ENCODE measurements at regions of chr6 and their contacts with region 1.

Region 1: DNA sequence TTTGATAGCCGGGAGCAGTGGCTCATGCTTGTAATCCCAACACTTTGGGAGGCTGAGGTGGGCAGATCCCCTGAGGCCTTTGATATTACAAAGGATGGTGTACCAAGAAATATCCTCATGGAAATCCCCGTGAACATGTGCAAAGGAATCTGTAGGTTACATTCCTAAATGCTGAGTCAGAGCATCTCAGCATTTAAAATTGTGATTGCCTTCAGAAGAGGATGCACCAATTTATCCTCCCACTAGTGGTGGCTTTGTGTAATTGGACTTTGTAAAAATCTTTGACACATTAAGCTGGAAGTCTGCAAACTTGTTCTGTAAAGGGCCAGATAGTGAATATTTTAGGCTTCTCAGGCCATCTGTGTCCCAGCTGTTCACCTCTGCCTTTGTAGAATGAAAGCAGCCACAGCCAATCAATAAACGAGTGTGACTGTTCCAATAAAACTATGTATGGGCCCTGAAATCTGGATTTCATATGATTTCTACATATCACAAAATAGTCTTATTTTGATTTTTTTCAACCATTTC is 11.8 kb downstream of the TMEM14B start:
- DNase-seq: peak; percentile 92
- H3K4me3 Mint-ChIP-seq: no peak overlapping the region
- H3K27ac Mint-ChIP-seq: peak overlapping the region; percentile 86
- H3K4me1 Mint-ChIP-seq: peaks cover 20% of the 10 kb centered on the region
- H3K27me3 Mint-ChIP-seq: no peaks in the 10 kb centered on the region
- CTCF ChIP-seq: peak; percentile 51

Region 2: DNA sequence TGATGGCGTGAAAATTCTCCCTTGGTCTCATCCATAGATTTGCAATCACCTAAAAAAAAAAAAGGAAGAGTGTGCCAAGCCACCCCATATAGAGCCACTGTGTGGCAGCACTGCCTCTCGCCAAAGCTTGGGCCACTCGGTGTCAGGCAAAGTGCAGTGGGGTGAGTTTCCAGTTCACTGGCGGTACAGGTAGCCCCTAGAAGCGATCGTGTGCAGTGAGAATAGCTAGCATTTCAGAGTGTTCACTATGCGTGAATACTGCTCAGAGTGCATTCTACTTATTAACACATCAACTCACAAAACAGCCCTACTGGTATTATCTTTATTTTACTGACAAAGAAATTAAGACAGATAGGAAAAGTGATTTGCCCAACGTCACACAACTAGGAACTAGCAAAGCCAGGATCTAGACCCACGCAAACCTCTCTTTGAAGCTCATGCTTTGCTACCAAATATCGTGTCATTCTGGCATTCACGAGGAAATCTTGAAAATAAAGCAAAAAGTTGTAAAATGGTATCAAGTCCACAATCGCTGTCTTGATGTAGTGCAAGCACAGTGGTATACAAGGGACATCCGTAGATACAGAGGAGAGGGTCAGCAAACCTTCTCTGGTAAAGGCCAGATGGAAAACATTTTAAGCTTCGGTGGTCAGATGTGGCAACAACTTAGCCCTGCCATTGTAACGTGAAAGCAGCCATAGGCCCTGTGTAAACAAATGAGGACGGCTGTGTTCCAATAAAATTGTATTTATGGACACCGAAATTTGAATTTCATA is 248.6 kb before region 1 on chr6:
- CTCF ChIA-PET with region 1: interaction called, 8 read pairs
- POLR2A ChIA-PET with region 1: interaction called, 3 read pairs
- intact Hi-C with region 1: loop called (anchors 1 kb)
- DNase-seq: peak; percentile 67
- H3K4me3 Mint-ChIP-seq: no peak overlapping the region
- H3K27ac Mint-ChIP-seq: no peak overlapping the region
- H3K4me1 Mint-ChIP-seq: peaks cover 6% of the 10 kb centered on the region
- H3K27me3 Mint-ChIP-seq: no peaks in the 10 kb centered on the region
- CTCF ChIP-seq: peak; percentile 71

Region 3: DNA sequence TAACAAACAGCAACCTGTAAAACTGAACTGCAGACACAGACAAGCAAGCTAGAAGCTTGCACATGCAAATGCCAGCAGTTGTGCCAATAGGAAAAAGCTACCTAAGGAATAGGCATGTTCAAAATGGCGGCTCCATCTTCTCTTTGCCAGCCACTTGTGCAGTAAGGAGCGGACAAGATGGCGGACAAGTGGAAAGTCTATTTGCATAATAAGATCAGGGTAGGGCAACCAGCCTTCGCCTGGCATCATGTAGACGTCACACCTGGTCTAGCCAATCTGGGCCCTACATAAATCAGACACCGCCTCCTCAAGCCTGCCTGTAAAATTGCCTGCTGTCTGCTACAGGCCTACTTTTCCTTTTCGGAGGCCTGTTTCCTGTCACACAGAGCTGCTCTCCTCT is 83.0 kb before region 1 on chr6:
- CTCF ChIA-PET with region 1: no interaction called
- POLR2A ChIA-PET with region 1: no interaction called
- intact Hi-C with region 1: no loop called
- DNase-seq: no peak
- H3K4me3 Mint-ChIP-seq: no peak overlapping the region
- H3K27ac Mint-ChIP-seq: no peak overlapping the region
- H3K4me1 Mint-ChIP-seq: no peaks in the 10 kb centered on the region
- H3K27me3 Mint-ChIP-seq: no peaks in the 10 kb centered on the region
- CTCF ChIP-seq: no peak

Region 4: DNA sequence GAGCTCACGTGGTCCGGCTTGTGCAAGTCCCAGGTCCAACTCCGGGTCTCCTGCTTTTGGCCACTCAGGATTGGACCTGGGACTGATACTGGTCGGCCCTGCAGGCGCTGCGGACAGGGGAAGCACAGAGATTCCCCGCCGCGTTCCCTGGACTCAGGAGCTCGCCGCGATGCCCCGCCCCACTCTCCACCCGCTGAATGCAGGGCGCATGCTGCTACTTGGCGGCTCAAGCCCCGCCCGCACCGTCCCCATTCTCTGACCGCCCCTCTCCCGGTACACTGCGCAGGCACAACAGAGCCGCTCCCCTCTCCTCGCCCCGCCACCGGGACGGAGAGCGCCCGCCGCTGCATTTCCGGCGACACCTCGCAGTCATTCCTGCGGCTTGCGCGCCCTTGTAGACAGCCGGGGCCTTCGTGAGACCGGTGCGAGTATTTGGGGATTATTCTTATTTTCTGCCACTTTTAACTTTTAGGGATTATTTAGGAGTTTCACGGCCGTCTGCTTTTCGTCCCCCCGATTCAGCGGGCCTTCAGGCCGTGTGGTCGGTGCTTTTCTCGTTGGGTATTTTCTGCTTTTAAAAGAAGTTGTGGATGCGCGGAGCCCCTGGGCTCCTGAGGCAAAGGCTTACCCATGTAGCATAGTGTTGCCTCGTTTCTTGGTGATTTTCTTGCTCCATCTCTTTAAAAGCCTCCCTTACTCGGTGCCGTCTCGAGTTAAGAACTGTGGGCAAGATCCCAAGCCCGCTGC is 36.4 kb before region 1 on chr6 and contains the start of gene TMEM14C:
- CTCF ChIA-PET with region 1: interaction called, 3 read pairs
- POLR2A ChIA-PET with region 1: interaction called, 16 read pairs
- intact Hi-C with region 1: loop called (anchors 1 kb)
- DNase-seq: peak; percentile 98
- H3K4me3 Mint-ChIP-seq: peak within 1 kb of the TSS; percentile 96
- H3K27ac Mint-ChIP-seq: peak within 1 kb of the TSS; percentile 97
- H3K4me1 Mint-ChIP-seq: peaks cover 27% of the 10 kb centered on the region
- H3K27me3 Mint-ChIP-seq: no peaks in the 10 kb centered on the region
- CTCF ChIP-seq: no peak
- total RNA-seq, gene TMEM14C: 159 and 160 TPM in 2 replicates

Region 5: DNA sequence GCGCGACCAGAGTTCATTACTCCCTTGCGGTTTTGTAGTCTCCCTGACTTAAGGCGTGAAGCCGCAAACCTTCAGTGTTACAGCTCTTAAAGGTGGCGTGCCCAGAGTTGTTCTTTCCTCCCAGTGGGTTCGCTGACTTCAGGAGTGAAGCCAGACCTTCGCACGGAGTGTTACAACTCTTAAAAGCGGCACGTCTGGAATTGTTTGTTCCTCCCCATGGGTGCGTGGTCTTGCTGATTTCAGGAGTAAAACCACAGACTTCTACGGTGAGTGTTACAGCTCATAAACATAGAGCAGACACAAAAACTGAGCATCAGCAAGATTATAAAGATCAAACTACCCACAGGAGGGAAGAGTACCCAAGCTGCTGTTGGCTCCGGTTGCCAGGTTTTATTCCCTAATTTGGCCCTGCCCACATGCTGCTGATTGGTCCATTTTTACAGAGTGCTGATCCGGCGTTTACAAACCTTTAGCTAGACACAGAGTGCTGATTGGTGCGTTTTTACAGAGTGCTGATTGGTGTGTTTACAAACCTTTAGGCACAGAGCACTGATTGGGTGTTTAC is 26.1 kb before region 1 on chr6:
- CTCF ChIA-PET with region 1: interaction called, 6 read pairs
- POLR2A ChIA-PET with region 1: interaction called, 10 read pairs
- intact Hi-C with region 1: loop called (anchors 1 kb)
- DNase-seq: no peak
- H3K4me3 Mint-ChIP-seq: no peak overlapping the region
- H3K27ac Mint-ChIP-seq: peak overlapping the region; percentile 88
- H3K4me1 Mint-ChIP-seq: peaks cover 7% of the 10 kb centered on the region
- H3K27me3 Mint-ChIP-seq: no peaks in the 10 kb centered on the region
- CTCF ChIP-seq: no peak

Region 6: DNA sequence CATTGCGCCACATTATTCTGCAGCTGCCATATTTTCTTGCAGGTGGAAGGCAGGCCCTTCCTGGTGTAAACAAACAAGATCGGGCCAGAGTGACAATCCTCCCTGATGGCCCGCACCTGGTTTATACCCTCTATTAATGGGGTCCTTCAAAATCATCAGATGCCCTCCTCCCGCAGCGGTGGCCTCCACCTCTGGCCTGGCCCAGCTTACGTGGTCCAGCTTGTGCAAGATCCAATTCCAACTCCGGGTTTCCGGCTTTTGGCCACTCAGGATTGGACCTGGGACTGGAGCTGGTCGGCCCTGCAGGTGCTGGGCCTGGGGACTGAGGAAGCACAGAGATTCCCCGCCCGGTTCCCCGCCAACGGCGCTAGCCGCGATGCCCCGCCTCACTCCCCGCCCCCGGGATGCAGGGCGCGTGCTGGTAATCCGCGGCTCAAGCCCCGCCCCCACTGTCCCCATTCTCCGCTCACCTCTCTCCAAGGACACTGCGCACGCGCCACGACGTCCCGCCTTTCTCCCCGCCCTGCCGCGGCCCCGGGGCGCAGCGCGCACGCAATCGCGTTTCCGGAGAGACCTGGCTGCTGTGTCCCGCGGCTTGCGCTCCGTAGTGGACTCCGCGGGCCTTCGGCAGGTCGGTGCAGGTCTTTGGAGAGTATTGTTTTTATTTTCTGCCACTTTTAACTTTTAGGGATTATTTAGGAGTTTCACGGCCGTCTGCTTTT is 12.0 kb before region 1 on chr6 and contains the start of gene TMEM14B:
- CTCF ChIA-PET with region 1: interaction called, 7 read pairs
- POLR2A ChIA-PET with region 1: interaction called, 46 read pairs
- intact Hi-C with region 1: no loop called
- DNase-seq: peak; percentile 97
- H3K4me3 Mint-ChIP-seq: peak within 1 kb of the TSS; percentile 95
- H3K27ac Mint-ChIP-seq: peak within 1 kb of the TSS; percentile 95
- H3K4me1 Mint-ChIP-seq: peaks cover 18% of the 10 kb centered on the region
- H3K27me3 Mint-ChIP-seq: no peaks in the 10 kb centered on the region
- CTCF ChIP-seq: no peak
- total RNA-seq, gene TMEM14B: 122 and 143 TPM in 2 replicates

Region 7: GRCh38 chr6:10800829-10801535 is 41.6 kb after region 1 on chr6:
- CTCF ChIA-PET with region 1: interaction called, 7 read pairs
- POLR2A ChIA-PET with region 1: no interaction called
- intact Hi-C with region 1: loop called (anchors 1 kb)
- DNase-seq: peak; percentile 76
- H3K4me3 Mint-ChIP-seq: no peak overlapping the region
- H3K27ac Mint-ChIP-seq: peak overlapping the region; percentile 57
- H3K4me1 Mint-ChIP-seq: peaks cover 8% of the 10 kb centered on the region
- H3K27me3 Mint-ChIP-seq: no peaks in the 10 kb centered on the region
- CTCF ChIP-seq: peak; percentile 96

Region 8: DNA sequence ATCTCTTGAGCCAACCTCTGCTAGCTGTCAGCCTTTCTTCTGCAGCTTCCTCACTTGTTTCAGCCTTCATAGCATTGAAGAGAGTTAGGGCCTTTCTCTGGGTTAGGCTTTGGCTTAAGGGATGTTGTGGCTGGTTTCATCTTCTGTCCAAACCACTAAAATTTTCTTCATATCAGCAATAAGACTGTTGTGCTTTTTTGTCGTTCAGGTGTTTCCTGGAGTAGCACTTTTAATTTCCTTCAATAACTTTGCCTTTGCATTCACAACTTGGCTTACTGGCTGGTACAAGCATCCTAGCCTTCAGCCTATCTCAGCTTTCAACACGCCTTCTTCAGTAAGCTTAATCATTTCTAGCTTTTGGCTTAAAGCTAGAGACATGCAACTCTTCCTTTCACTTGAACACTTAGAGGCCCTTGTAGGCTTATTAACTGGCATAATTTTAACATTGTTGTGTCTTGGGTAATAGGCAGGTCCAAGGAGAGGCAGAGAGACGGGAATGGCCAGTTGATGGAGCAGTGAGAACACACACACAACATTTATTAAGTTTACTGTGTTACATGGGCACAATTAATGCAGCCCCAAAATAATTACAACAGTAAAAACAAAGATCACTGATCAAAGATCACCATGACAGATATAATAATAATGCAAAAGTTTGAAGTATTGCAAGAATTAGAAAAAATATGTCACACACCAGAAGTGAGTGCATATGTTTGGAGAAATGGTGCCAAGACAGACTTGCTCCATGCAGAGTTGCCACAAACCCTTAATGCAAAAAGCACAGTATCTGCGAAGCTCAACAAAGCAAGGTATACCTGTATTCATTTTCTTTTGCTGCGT is 1351.4 kb after region 1 on chr6:
- CTCF ChIA-PET with region 1: no interaction called
- POLR2A ChIA-PET with region 1: no interaction called
- intact Hi-C with region 1: no loop called
- DNase-seq: no peak
- H3K4me3 Mint-ChIP-seq: no peak overlapping the region
- H3K27ac Mint-ChIP-seq: no peak overlapping the region
- H3K4me1 Mint-ChIP-seq: peaks cover 12% of the 10 kb centered on the region
- H3K27me3 Mint-ChIP-seq: no peaks in the 10 kb centered on the region
- CTCF ChIP-seq: no peak

Measured in MCF 10A (cell line).